CD8-positive, alpha-beta T cell (primary cell): ENCODE measurements at regions of chr22 and their contacts with region 1.

Region 1: GRCh38 chr22:37051391-37052385 is at the start of gene KCTD17:
- DNase-seq: peak; percentile 40 to 84 (median 72)
- ATAC-seq: peak; percentile 100
- H3K4me3 ChIP-seq: peak within 1 kb of the TSS; percentile 46 to 65
- H3K4me3 Mint-ChIP-seq: peak within 1 kb of the TSS; percentile 84
- H3K27ac ChIP-seq: peak within 1 kb of the TSS in 1 of 2 experiments; percentile 37
- H3K27ac Mint-ChIP-seq: no peak within 1 kb of the TSS
- H3K4me1 ChIP-seq: peaks cover 11% of the 10 kb centered on the region
- H3K4me1 Mint-ChIP-seq: peaks cover 10% of the 10 kb centered on the region
- H3K27me3 ChIP-seq: no peaks in the 10 kb centered on the region
- H3K27me3 Mint-ChIP-seq: no peaks in the 10 kb centered on the region
- CTCF ChIP-seq: no peak
- total RNA-seq, gene KCTD17: 18.6 to 22.8 TPM

Region 2: DNA sequence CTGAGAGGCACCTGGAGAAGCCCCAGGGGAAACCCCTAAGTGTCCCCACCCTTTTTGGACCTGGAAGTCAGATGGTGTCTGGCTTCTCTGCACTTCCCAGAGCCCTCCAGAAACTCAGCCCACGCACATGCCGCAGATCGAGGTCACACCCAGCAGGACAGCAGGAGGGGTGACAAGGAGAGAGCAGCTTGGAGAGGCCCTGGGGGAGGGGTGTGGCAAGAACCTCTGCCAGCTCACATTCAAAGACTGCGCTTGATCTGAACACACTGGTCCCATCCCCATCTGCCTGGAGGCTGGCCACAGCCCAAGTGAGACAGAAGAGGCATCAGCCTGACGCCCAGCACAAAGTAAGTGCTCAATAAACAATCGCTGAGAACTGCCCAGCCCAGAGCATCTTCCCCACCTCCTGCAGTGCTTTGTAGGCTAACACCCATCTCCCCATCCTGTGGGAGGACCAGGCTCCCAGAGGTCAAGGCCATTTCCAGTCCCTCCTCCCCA is 36.5 kb after region 1 on chr22:
- CTCF ChIA-PET with region 1: no interaction called
- POLR2A ChIA-PET with region 1: no interaction called
- intact Hi-C with region 1: loop called in 1 of 2 experiments (anchors 1 kb)
- DNase-seq: peak in 1 of 9 experiments; percentile 27
- ATAC-seq: no peak
- H3K4me3 ChIP-seq: no peak overlapping the region
- H3K4me3 Mint-ChIP-seq: no peak overlapping the region
- H3K27ac ChIP-seq: no peak overlapping the region
- H3K27ac Mint-ChIP-seq: no peak overlapping the region
- H3K4me1 ChIP-seq: no peaks in the 10 kb centered on the region
- H3K4me1 Mint-ChIP-seq: peaks cover 2% of the 10 kb centered on the region
- H3K27me3 ChIP-seq: no peaks in the 10 kb centered on the region
- H3K27me3 Mint-ChIP-seq: peaks cover 2% of the 10 kb centered on the region
- CTCF ChIP-seq: no peak